ENCODE measurements at regions of chr6 and their contacts with region 1.

Region 1: GRCh38 chr6:122381497-122382265 is 17.8 kb upstream of the HSF2 start:
- DNase-seq: peak; percentile 65
- H3K4me3 Mint-ChIP-seq: no peak overlapping the region
- H3K27ac Mint-ChIP-seq: no peak overlapping the region
- H3K4me1 Mint-ChIP-seq: peaks cover 4% of the 10 kb centered on the region
- H3K27me3 Mint-ChIP-seq: peaks cover 11% of the 10 kb centered on the region

Region 2: DNA sequence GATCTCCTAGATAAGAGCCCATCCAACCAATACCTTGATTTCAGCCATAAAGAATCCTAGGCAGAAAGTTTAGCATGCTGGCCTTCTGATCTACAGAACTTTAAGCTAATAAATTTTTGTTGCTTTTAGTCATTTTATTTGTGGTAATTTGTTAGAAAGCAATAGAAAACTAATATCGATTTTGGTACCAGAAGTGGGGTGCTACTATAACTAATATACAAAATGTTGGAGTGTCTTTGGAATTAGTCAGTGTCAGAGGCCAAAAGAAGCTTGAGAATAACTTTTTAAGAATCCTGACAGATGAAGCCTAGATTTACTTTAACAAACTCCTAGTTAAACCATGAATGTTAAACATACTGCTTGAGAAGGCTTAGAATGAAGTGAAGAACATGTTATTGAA is 65.8 kb before region 1 on chr6:
- CTCF ChIA-PET with region 1: no interaction called
- POLR2A ChIA-PET with region 1: no interaction called
- intact Hi-C with region 1: no loop called
- DNase-seq: no peak
- H3K4me3 Mint-ChIP-seq: no peak overlapping the region
- H3K27ac Mint-ChIP-seq: no peak overlapping the region
- H3K4me1 Mint-ChIP-seq: no peaks in the 10 kb centered on the region
- H3K27me3 Mint-ChIP-seq: peaks cover 1% of the 10 kb centered on the region

Region 3: GRCh38 chr6:122361314-122361979 is 20.2 kb before region 1 on chr6:
- CTCF ChIA-PET with region 1: no interaction called
- POLR2A ChIA-PET with region 1: no interaction called
- intact Hi-C with region 1: no loop called
- DNase-seq: no peak
- H3K4me3 Mint-ChIP-seq: no peak overlapping the region
- H3K27ac Mint-ChIP-seq: no peak overlapping the region
- H3K4me1 Mint-ChIP-seq: no peaks in the 10 kb centered on the region
- H3K27me3 Mint-ChIP-seq: peaks cover 10% of the 10 kb centered on the region

Region 4: DNA sequence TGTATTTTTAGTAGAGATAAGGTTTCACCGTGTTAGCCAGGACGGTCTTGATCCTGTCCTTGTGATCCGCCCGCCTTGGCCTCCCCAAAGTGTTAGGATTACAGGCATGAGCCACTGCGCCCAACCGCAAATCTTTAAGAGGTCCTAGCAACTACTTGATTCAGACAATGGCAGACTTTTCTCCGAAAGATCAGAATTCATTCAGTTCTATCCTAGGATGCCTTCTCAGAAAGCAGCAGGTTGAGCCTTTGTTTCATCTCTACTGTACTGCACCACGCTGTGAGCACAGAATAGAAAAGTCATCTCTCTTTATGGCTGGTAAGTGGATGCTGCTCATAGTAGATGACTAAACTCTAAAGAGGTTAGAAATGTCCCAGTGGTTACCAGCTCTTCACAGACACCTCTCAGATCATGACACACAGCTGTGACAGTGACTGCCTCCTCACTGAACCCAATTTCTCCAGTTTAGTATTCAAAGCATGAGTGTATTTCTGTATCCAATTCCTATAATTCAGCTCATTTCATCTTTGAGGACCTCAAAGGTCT is 11.7 kb after region 1 on chr6:
- CTCF ChIA-PET with region 1: interaction called, 24 read pairs
- POLR2A ChIA-PET with region 1: no interaction called
- intact Hi-C with region 1: no loop called
- DNase-seq: peak; percentile 28
- H3K4me3 Mint-ChIP-seq: no peak overlapping the region
- H3K27ac Mint-ChIP-seq: peak overlapping the region; percentile 64
- H3K4me1 Mint-ChIP-seq: peaks cover 15% of the 10 kb centered on the region
- H3K27me3 Mint-ChIP-seq: peaks cover 3% of the 10 kb centered on the region

Region 5: DNA sequence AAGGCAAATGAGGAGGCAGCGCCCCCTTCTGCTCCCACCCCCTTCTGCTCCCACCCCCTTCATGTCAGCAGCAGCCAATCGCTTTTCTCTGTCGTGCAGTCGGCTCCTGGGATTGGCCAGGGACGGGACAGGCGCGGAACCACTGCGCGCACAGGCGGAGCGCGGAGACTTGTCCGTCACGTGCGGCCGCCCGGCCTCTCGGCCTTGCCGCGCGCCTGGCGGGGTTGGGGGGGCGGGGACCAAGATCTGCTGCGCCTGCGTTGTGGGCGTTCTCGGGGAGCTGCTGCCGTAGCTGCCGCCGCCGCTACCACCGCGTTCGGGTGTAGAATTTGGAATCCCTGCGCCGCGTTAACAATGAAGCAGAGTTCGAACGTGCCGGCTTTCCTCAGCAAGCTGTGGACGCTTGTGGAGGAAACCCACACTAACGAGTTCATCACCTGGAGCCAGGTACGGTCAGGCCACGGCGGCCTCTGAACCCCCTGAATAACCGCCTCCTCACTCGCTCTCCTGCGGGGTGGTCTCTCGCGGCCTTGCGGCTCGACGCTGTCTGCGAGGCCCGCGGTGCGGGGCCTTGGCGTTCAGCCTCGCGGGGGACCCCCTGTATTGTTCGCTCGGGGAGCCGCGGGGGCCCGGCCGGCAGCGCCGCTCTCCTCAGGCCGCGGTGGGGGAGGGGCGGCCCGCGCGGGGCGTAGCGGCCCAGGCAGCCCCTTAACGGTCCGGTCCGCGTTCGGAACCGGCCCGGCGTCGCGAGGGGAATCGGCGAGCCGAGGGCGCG is 17.9 kb after region 1 on chr6 and contains the start of gene HSF2:
- CTCF ChIA-PET with region 1: interaction called, 5 read pairs
- POLR2A ChIA-PET with region 1: no interaction called
- intact Hi-C with region 1: loop called (anchors 1 kb)
- DNase-seq: peak; percentile 97
- H3K4me3 Mint-ChIP-seq: peak within 1 kb of the TSS; percentile 95
- H3K27ac Mint-ChIP-seq: peak within 1 kb of the TSS; percentile 91
- H3K4me1 Mint-ChIP-seq: peaks cover 36% of the 10 kb centered on the region
- H3K27me3 Mint-ChIP-seq: no peaks in the 10 kb centered on the region
- total RNA-seq, gene HSF2: 16.0 to 18.5 TPM

Region 6: DNA sequence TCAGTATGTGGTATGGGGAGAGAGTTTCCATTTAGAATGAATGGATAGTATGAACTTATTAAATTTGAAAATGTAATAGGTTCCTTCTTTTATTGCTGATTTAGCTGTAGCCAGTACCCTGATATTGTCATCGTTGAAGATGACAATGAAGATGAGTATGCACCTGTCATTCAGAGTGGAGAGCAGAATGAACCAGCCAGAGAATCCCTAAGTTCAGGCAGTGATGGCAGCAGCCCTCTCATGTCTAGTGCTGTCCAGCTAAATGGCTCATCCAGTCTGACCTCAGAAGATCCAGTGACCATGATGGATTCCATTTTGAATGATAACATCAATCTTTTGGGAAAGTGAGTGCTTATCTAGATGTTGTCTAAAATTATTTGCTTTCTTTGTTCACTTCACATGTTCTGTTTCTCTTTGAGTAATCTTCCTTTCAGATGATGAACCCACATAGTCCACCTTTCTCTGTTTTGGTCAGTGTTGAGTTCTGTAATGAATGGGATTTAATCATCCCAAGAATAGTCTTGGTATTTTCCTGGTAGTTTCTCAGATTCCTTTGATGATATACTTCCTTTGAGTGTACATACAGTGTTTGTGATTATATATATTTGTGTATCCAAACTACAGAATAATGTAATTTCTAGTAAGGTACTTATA is 41.1 kb after region 1 on chr6:
- CTCF ChIA-PET with region 1: interaction called, 3 read pairs
- POLR2A ChIA-PET with region 1: no interaction called
- intact Hi-C with region 1: loop called (anchors 5 kb)
- DNase-seq: no peak
- H3K4me3 Mint-ChIP-seq: no peak overlapping the region
- H3K27ac Mint-ChIP-seq: no peak overlapping the region
- H3K4me1 Mint-ChIP-seq: peaks cover 7% of the 10 kb centered on the region
- H3K27me3 Mint-ChIP-seq: no peaks in the 10 kb centered on the region

Region 7: DNA sequence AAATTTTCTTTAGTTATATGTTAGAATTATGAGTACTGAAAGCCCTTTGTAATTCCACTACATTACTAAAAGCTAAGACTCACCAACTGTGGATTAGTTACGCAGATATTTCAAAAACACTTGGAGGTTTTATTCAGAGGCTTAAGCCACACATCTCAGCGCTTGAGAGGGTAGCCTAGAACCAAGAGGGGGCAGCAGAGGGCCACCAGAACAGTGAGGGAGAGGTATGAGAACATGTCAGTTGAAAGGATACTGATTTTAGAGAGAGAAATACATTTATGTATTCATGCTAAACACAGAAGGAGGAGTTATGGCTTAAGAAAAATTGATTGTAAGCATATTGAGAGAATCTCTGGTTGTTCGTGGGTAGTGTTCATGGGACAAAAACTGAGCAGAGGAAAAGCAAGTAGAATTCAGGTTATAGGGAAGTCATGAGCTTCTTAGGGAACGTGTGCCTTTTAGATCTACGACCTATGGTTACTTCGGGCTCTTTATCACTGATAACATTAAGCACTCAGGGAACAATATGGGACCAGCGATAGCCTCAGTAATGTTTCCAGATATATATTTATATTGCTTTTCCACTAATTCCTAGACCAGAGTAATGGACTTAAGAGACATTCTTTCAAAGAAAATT is 110.4 kb after region 1 on chr6:
- CTCF ChIA-PET with region 1: interaction called, 19 read pairs
- POLR2A ChIA-PET with region 1: no interaction called
- intact Hi-C with region 1: no loop called
- DNase-seq: peak; percentile 78
- H3K4me3 Mint-ChIP-seq: no peak overlapping the region
- H3K27ac Mint-ChIP-seq: no peak overlapping the region
- H3K4me1 Mint-ChIP-seq: peaks cover 5% of the 10 kb centered on the region
- H3K27me3 Mint-ChIP-seq: peaks cover 8% of the 10 kb centered on the region

Region 8: GRCh38 chr6:122548281-122548680 is 166.6 kb after region 1 on chr6:
- CTCF ChIA-PET with region 1: no interaction called
- POLR2A ChIA-PET with region 1: no interaction called
- intact Hi-C with region 1: no loop called
- DNase-seq: no peak
- H3K4me3 Mint-ChIP-seq: no peak overlapping the region
- H3K27ac Mint-ChIP-seq: no peak overlapping the region
- H3K4me1 Mint-ChIP-seq: no peaks in the 10 kb centered on the region
- H3K27me3 Mint-ChIP-seq: peaks cover 7% of the 10 kb centered on the region

Measured in activated CD4-positive, alpha-beta memory T cell treated with anti-CD3 and anti-CD28 coated beads for 36 hours (primary cell).